Activated CD4-positive, alpha-beta T cell treated with anti-CD3 and anti-CD28 coated beads, Interleukin-2, amount 10 ng/mL, durations not matched to agents 24 days and 14 days (primary cell): ENCODE measurements at regions of chr22 and their contacts with region 1.

Region 1: DNA sequence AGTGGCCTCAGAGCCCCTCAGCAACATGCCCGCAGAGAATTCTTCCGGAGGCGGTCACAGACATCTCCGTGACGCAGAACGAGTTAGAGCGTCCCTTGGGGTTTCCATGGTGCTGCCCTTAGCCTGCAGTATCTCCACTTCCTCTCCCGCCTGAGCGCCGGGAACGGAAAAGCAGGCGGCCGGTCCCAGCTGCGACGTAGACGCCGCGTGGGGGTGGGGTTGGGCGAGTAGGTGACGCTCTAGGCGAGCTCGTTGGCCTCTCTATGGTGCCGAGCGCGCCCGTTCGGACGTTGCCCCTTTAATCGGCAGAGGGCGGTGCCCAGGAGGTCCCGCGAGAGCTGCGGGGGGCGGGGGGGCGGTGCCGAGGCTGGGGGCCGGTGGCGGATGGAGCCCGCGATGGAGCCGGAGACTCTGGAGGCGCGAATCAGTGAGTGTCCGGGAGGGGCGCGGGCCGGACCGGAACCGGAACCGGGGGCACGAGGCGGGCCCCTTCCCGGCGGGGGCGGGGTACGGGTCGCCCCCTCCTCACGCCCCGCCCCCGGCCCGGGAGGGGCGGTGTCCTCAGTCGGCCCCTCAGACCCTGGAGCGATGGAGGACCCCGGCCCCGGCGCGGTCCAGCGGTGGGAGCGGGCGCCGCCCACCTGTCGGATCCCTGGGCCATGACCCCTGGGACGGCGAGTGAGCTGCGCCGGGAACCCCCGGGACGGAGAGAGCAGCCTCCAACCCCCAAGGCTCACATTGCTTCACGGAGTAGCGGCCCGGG is at the start of gene GGA1:
- DNase-seq: peak; percentile 99
- H3K4me3 Mint-ChIP-seq: peak within 1 kb of the TSS; percentile 99
- H3K27ac Mint-ChIP-seq: peak within 1 kb of the TSS; percentile 98
- H3K4me1 Mint-ChIP-seq: peaks cover 40% of the 10 kb centered on the region
- H3K27me3 Mint-ChIP-seq: peaks cover 3% of the 10 kb centered on the region
- total RNA-seq, gene GGA1: 75.8 and 77.2 TPM in 2 replicates

Region 2: GRCh38 chr22:37244114-37244921 is 364.3 kb before region 1 on chr22 and contains the start of gene RAC2:
- intact Hi-C with region 1: loop called (anchors 1 kb)
- DNase-seq: peak; percentile 95
- H3K4me3 Mint-ChIP-seq: peak within 1 kb of the TSS; percentile 99
- H3K27ac Mint-ChIP-seq: peak within 1 kb of the TSS; percentile 98
- H3K4me1 Mint-ChIP-seq: peaks cover 48% of the 10 kb centered on the region
- H3K27me3 Mint-ChIP-seq: no peaks in the 10 kb centered on the region
- total RNA-seq, gene RAC2: 519 and 540 TPM in 2 replicates

Region 3: DNA sequence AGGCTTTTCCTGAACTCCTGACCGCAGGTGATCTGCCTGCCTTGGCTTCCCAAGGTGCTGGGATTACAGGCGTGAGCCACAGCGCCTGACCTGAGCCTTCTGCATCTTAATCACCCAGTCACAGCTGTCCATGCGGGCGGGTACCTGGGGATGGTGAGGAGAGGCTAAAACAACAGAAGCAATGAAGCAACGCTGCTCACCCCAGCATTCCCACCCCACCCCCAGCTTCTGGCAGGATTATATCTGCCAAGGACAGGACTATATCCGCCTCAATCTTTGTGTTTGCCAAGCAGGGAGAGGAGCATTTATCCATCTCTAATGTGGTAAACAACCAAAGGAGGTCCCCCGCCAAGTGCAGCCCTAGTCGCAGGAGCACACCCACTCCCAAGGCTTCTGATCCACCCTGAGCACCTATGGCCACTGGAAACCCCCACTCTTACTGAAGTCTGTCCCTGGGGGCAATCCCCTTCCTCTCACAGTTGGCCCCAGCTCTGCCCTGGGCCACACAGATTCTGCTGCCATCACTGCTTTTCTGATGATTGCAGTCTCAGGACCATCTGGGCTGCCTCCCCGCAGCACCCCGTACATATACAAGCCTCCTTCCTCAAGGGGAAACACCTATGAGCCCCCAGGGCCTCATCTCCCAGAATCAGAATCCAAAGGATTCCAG is 20.0 kb before region 1 on chr22:
- intact Hi-C with region 1: no loop called
- DNase-seq: no peak
- H3K4me3 Mint-ChIP-seq: no peak overlapping the region
- H3K27ac Mint-ChIP-seq: no peak overlapping the region
- H3K4me1 Mint-ChIP-seq: peaks cover 10% of the 10 kb centered on the region
- H3K27me3 Mint-ChIP-seq: peaks cover 8% of the 10 kb centered on the region

Region 4: GRCh38 chr22:37623075-37624016 is 14.7 kb after region 1 on chr22:
- intact Hi-C with region 1: loop called (anchors 1 kb)
- DNase-seq: peak; percentile 92
- H3K4me3 Mint-ChIP-seq: no peak overlapping the region
- H3K27ac Mint-ChIP-seq: peak overlapping the region; percentile 80
- H3K4me1 Mint-ChIP-seq: peaks cover 17% of the 10 kb centered on the region
- H3K27me3 Mint-ChIP-seq: no peaks in the 10 kb centered on the region

Region 5: GRCh38 chr22:37658133-37659065 is 49.7 kb after region 1 on chr22 and contains the start of gene PDXP:
- intact Hi-C with region 1: loop called (anchors 1 kb)
- DNase-seq: peak; percentile 100
- H3K4me3 Mint-ChIP-seq: peak within 1 kb of the TSS; percentile 94
- H3K27ac Mint-ChIP-seq: peak within 1 kb of the TSS; percentile 91
- H3K4me1 Mint-ChIP-seq: peaks cover 35% of the 10 kb centered on the region
- H3K27me3 Mint-ChIP-seq: no peaks in the 10 kb centered on the region
- total RNA-seq, gene PDXP: 49.3 and 51.2 TPM in 2 replicates

Region 6: GRCh38 chr22:37686002-37686982 is 77.6 kb after region 1 on chr22 and contains the start of gene NOL12:
- intact Hi-C with region 1: loop called (anchors 1 kb)
- DNase-seq: peak; percentile 94
- H3K4me3 Mint-ChIP-seq: peak within 1 kb of the TSS; percentile 95
- H3K27ac Mint-ChIP-seq: peak within 1 kb of the TSS; percentile 90
- H3K4me1 Mint-ChIP-seq: peaks cover 19% of the 10 kb centered on the region
- H3K27me3 Mint-ChIP-seq: no peaks in the 10 kb centered on the region
- total RNA-seq, gene NOL12: 67.9 and 70.3 TPM in 2 replicates

Region 7: GRCh38 chr22:37849089-37849751 is 240.6 kb after region 1 on chr22 and contains the start of gene EIF3L:
- intact Hi-C with region 1: loop called (anchors 1 kb)
- DNase-seq: peak; percentile 97
- H3K4me3 Mint-ChIP-seq: peak within 1 kb of the TSS; percentile 98
- H3K27ac Mint-ChIP-seq: peak within 1 kb of the TSS; percentile 97
- H3K4me1 Mint-ChIP-seq: peaks cover 41% of the 10 kb centered on the region
- H3K27me3 Mint-ChIP-seq: no peaks in the 10 kb centered on the region
- total RNA-seq, gene EIF3L: 460 and 480 TPM in 2 replicates